PC-3 (cell line): ENCODE measurements at regions of chr5 and their contacts with region 1.

Region 1: DNA sequence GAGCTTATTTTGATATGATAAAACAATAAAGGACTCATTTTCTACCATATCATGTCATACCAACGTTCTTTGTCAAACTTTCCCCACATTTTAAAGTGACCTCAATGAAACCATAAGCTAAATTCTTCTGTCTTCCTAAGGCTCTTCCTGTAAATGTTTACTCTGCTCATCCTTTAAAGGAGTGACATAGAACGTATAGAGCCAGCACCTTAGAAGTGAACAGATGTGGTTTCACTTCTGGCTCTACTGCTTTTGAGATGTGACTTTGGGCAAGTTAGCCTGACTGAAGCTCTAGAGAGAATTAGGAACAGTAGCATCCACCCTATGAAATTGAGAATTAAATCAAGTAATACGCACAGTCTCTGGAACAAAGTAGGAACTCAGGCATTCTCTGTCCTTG is 24.1 kb downstream of the SAR1B start:
- DNase-seq: no peak
- ATAC-seq: no peak
- H3K4me3 ChIP-seq: no peak overlapping the region
- H3K27ac ChIP-seq: no peak overlapping the region
- H3K4me1 ChIP-seq: peaks cover 1% of the 10 kb centered on the region; the same call in 1 of the 2 replicates
- H3K27me3 ChIP-seq: no peaks in the 10 kb centered on the region
- CTCF ChIP-seq: no peak

Region 2: GRCh38 chr5:134138416-134139376 is 469.9 kb before region 1 on chr5:
- CTCF ChIA-PET with region 1: no interaction called
- POLR2A ChIA-PET with region 1: no interaction called
- intact Hi-C with region 1: no loop called
- DNase-seq: peak; percentile 75
- ATAC-seq: peak; percentile 45
- H3K4me3 ChIP-seq: no peak overlapping the region
- H3K27ac ChIP-seq: peak overlapping the region; percentile 90
- H3K4me1 ChIP-seq: peaks cover 22% of the 10 kb centered on the region
- H3K27me3 ChIP-seq: no peaks in the 10 kb centered on the region
- CTCF ChIP-seq: no peak

Region 3: DNA sequence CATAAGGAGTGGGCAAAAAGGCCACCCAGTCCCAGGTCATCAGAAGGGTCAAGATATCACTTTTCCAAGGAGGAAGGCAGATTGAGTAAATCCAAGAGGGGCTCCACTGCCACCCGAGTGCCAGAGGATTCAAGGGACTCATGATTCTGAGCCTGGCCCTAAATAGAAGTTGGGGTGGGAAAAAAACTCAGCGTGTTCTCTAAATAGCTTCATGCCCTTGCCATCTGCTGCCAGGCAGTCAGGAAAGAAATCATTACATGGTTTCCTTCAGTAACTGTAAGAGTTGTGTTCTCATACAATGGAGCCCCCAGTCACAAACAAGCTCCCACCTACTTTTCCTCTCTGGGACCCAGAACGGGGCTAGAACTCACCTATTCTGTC is 13.1 kb before region 1 on chr5:
- CTCF ChIA-PET with region 1: no interaction called
- POLR2A ChIA-PET with region 1: interaction called, 12 read pairs
- intact Hi-C with region 1: no loop called
- DNase-seq: no peak
- ATAC-seq: no peak
- H3K4me3 ChIP-seq: no peak overlapping the region
- H3K27ac ChIP-seq: no peak overlapping the region
- H3K4me1 ChIP-seq: peaks cover 24% of the 10 kb centered on the region
- H3K27me3 ChIP-seq: no peaks in the 10 kb centered on the region
- CTCF ChIP-seq: no peak